ENCODE measurements at regions of chr11 and their contacts with region 1.

Region 1: DNA sequence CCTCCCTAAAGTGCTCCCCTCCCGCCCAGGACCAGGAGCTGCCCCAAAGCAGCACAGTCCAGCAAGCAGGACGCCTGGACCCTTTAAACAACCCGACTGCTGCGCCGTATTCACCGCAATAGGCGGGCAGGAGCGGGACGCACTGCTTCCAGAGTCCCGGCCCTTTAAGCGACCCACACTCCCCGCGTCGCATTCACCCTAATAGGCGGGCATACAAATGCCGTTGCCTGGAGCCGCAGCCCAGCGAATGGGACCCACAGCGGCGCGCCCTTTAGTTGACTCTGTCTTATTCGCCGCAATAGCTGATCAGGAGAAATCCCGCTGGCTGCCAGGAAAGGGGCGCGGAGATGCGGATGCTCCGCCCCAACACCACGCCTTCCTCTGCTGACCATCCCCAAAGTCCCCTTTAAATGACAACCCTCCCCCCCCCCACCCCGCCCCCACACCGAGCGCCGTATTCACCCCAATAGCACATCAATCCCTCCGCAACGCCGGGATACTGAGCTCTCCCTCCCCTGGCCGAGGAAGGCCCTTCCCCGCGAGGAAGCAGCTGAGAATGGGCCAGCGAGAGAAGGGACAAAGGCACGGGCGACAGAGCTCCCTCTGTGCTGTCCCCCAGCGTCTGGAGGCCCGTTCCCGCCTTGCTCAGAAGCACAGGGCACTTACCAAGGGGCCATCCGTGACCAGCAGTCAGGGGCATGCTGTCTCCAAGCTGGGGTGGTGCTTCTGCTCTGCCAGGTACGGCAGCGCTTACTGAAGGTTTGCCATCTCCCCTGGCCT is 4.7 kb downstream of the OSBPL5 start:
- DNase-seq: peak; percentile 92
- H3K4me3 ChIP-seq: peak overlapping the region; percentile 9 to 54 (median 29)
- H3K27ac ChIP-seq: no peak overlapping the region
- H3K4me1 ChIP-seq: peaks cover 5% of the 10 kb centered on the region
- H3K27me3 ChIP-seq: no peaks in the 10 kb centered on the region
- CTCF ChIP-seq: no peak
- POLR2A ChIP-seq: no peak

Region 2: DNA sequence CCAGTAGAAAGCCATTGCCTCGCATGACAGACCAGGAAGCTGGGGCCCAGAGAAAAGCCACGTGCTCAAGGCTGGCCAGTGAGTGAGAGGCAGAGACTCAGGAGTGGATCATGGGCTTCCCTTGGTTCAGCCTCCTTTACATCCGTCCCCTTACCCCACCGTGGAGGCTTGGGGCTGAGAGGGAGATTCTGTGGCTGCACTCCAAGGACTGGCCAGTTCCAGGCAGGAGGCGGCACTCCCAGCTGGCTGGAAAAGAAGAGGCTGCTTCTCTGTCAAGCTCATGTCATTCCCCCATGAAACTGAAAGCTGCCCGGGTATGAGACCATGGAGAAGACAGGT is 883.5 kb before region 1 on chr11:
- CTCF ChIA-PET with region 1: no interaction called
- POLR2A ChIA-PET with region 1: no interaction called
- dilution Hi-C with region 1: no loop called
- intact Hi-C with region 1: no loop called
- DNase-seq: no peak
- H3K4me3 ChIP-seq: no peak overlapping the region
- H3K27ac ChIP-seq: no peak overlapping the region
- H3K4me1 ChIP-seq: no peaks in the 10 kb centered on the region
- H3K27me3 ChIP-seq: peaks cover 15 to 16% of the 10 kb centered on the region in 2 experiments
- CTCF ChIP-seq: no peak
- POLR2A ChIP-seq: no peak

Region 3: GRCh38 chr11:3057069-3057963 is 103.1 kb before region 1 on chr11 and contains the start of gene CARS1:
- CTCF ChIA-PET with region 1: no interaction called
- POLR2A ChIA-PET with region 1: no interaction called
- dilution Hi-C with region 1: no loop called
- intact Hi-C with region 1: loop called (anchors 1 kb)
- DNase-seq: peak; percentile 89
- H3K4me3 ChIP-seq: peak within 1 kb of the TSS; percentile 70 to 84 (median 83)
- H3K27ac ChIP-seq: peak within 1 kb of the TSS; percentile 68
- H3K4me1 ChIP-seq: peaks cover 9% of the 10 kb centered on the region
- H3K27me3 ChIP-seq: peaks cover 0 to 1% of the 10 kb centered on the region in 2 experiments
- CTCF ChIP-seq: no peak
- POLR2A ChIP-seq: peak; percentile 70
- total RNA-seq, gene CARS1: 66.2 and 72.3 TPM in 2 replicates

Region 4: DNA sequence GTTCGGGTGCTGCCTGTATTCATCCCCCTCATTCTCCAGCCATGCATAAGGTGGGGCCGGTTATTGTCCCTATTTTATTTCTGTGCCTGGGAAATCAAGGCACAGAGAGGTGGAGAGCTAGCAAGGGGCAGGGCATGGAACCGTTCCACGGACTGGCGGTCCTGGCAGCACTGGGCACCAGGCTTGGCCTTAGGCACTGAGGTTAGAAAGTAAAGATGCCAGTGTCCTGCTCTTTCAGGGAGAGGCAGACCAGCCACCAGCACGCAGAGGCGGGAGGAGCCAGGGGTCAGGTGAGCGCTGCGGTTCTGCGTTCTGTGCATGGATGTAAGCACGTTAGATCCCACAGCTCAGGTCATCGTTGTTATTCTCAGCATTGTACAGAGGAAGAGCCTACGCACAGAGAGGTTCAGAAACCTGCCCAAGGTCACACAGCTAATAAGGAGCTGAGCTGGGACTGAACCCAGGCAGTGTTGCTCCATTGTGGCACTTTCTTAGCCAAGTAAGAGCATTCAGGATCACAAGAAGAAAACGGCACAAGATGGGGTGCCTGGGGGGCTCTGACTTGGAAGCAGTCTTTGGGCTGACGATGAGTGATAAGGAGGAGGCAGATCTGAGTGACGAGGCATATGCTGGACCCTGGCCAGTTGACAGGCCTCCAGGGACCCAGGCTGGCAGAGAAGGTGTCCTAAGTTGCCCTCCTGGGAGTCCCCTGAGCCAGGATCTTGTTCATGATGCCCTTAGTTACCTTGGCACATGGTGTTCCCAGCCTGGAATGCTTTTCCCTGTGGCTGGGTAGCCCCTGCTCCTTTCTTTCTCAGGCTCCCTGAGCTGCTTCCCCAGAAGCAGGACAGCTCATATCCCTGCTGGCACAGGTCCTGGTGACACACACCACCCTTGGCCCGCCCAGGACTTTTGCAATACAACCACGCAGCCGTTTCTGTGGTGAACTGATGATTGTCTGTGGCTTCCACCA is 36.4 kb before region 1 on chr11:
- CTCF ChIA-PET with region 1: interaction called, 5 read pairs
- POLR2A ChIA-PET with region 1: no interaction called
- dilution Hi-C with region 1: no loop called
- intact Hi-C with region 1: loop called (anchors 2 kb)
- DNase-seq: peak; percentile 83
- H3K4me3 ChIP-seq: no peak overlapping the region
- H3K27ac ChIP-seq: peak overlapping the region; percentile 67
- H3K4me1 ChIP-seq: peaks cover 25% of the 10 kb centered on the region
- H3K27me3 ChIP-seq: no peaks in the 10 kb centered on the region
- CTCF ChIP-seq: no peak
- POLR2A ChIP-seq: no peak

Region 5: GRCh38 chr11:3182462-3182852 is 22.0 kb after region 1 on chr11:
- CTCF ChIA-PET with region 1: no interaction called
- POLR2A ChIA-PET with region 1: no interaction called
- dilution Hi-C with region 1: no loop called
- intact Hi-C with region 1: no loop called
- DNase-seq: no peak
- H3K4me3 ChIP-seq: no peak overlapping the region
- H3K27ac ChIP-seq: no peak overlapping the region
- H3K4me1 ChIP-seq: no peaks in the 10 kb centered on the region
- H3K27me3 ChIP-seq: peaks cover 0 to 3% of the 10 kb centered on the region in 2 experiments
- CTCF ChIP-seq: no peak
- POLR2A ChIP-seq: no peak

Region 6: GRCh38 chr11:3203221-3204043 is 43.0 kb after region 1 on chr11:
- CTCF ChIA-PET with region 1: no interaction called
- POLR2A ChIA-PET with region 1: no interaction called
- dilution Hi-C with region 1: no loop called
- intact Hi-C with region 1: no loop called
- DNase-seq: no peak
- H3K4me3 ChIP-seq: no peak overlapping the region
- H3K27ac ChIP-seq: no peak overlapping the region
- H3K4me1 ChIP-seq: no peaks in the 10 kb centered on the region
- H3K27me3 ChIP-seq: peaks cover 8 to 17% of the 10 kb centered on the region in 2 experiments
- CTCF ChIP-seq: no peak
- POLR2A ChIP-seq: no peak

Region 7: GRCh38 chr11:3220521-3221407 is 60.3 kb after region 1 on chr11:
- CTCF ChIA-PET with region 1: interaction called, 4 read pairs
- POLR2A ChIA-PET with region 1: no interaction called
- dilution Hi-C with region 1: no loop called
- intact Hi-C with region 1: loop called (anchors 5 kb)
- DNase-seq: no peak
- H3K4me3 ChIP-seq: no peak overlapping the region
- H3K27ac ChIP-seq: no peak overlapping the region
- H3K4me1 ChIP-seq: no peaks in the 10 kb centered on the region
- H3K27me3 ChIP-seq: no peaks in the 10 kb centered on the region
- CTCF ChIP-seq: no peak
- POLR2A ChIP-seq: no peak

Measured in endothelial cell of umbilical vein (primary cell).